Naive thymus-derived CD4-positive, alpha-beta T cell (primary cell): ENCODE measurements at regions of chr5 and their contacts with region 1.

Region 1: GRCh38 chr5:37319037-37319782 is 51.7 kb downstream of the NUP155 start:
- DNase-seq: no peak
- ATAC-seq: no peak
- H3K4me3 ChIP-seq: no peak overlapping the region
- H3K4me3 Mint-ChIP-seq: no peak overlapping the region
- H3K27ac ChIP-seq: no peak overlapping the region
- H3K27ac Mint-ChIP-seq: peak overlapping the region in 1 of 9 donors; percentile 38
- H3K4me1 ChIP-seq: no peaks in the 10 kb centered on the region
- H3K4me1 Mint-ChIP-seq: peaks cover 0 to 16% (median 0%) of the 10 kb centered on the region in 7 donors
- H3K27me3 ChIP-seq: no peaks in the 10 kb centered on the region
- H3K27me3 Mint-ChIP-seq: no peaks in the 10 kb centered on the region

Region 2: GRCh38 chr5:37043688-37044087 is 275.5 kb before region 1 on chr5:
- CTCF ChIA-PET with region 1: no interaction called
- POLR2A ChIA-PET with region 1: no interaction called
- intact Hi-C with region 1: loop called in 1 of 2 experiments (anchors 10 kb)
- DNase-seq: no peak
- ATAC-seq: no peak
- H3K4me3 ChIP-seq: no peak overlapping the region
- H3K4me3 Mint-ChIP-seq: no peak overlapping the region
- H3K27ac ChIP-seq: no peak overlapping the region
- H3K27ac Mint-ChIP-seq: no peak overlapping the region
- H3K4me1 ChIP-seq: peaks cover 0 to 3% of the 10 kb centered on the region in 2 donors
- H3K4me1 Mint-ChIP-seq: peaks cover 0 to 4% (median 0%) of the 10 kb centered on the region in 7 donors
- H3K27me3 ChIP-seq: no peaks in the 10 kb centered on the region
- H3K27me3 Mint-ChIP-seq: no peaks in the 10 kb centered on the region

Region 3: DNA sequence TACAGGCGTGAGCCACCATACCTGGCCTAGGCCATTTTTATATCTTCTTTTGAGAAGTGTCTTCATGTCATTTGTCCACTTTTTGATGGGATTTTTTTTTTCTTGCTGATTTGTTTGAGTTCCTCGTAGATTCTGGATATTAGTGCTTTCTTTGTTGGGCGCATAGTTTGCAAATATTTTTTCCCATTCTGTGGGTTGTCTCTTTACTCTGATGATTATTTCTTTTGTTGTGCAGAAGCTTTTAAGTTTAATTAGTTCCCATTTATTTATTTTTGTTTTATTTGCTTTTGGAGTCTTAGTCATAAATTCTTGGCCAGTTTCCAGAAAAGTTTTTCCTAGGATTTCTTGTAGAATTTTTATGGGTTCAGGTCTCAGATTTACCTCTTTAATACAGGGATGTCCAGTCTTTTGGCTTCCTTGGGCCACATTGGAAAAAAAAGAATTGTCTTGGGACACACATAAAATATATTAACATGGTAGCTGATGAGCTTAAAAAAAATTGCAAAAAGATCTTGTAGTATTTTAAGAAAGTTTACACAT is 181.9 kb after region 1 on chr5:
- CTCF ChIA-PET with region 1: no interaction called
- POLR2A ChIA-PET with region 1: no interaction called
- intact Hi-C with region 1: no loop called
- DNase-seq: no peak
- ATAC-seq: no peak
- H3K4me3 ChIP-seq: no peak overlapping the region
- H3K4me3 Mint-ChIP-seq: no peak overlapping the region
- H3K27ac ChIP-seq: no peak overlapping the region
- H3K27ac Mint-ChIP-seq: no peak overlapping the region
- H3K4me1 ChIP-seq: no peaks in the 10 kb centered on the region
- H3K4me1 Mint-ChIP-seq: peaks cover 0 to 21% (median 5%) of the 10 kb centered on the region in 7 donors
- H3K27me3 ChIP-seq: no peaks in the 10 kb centered on the region
- H3K27me3 Mint-ChIP-seq: no peaks in the 10 kb centered on the region